ENCODE measurements at regions of chr1 and their contacts with region 1.

Region 1: GRCh38 chr1:31182352-31182751 is 57.3 kb downstream of the NKAIN1 start:
- DNase-seq: peak; percentile 74
- ATAC-seq: peak; percentile 46
- H3K4me3 Mint-ChIP-seq: no peak overlapping the region
- H3K27ac Mint-ChIP-seq: no peak overlapping the region
- H3K4me1 Mint-ChIP-seq: peaks cover 7% of the 10 kb centered on the region
- H3K27me3 Mint-ChIP-seq: peaks cover 38% of the 10 kb centered on the region

Region 2: DNA sequence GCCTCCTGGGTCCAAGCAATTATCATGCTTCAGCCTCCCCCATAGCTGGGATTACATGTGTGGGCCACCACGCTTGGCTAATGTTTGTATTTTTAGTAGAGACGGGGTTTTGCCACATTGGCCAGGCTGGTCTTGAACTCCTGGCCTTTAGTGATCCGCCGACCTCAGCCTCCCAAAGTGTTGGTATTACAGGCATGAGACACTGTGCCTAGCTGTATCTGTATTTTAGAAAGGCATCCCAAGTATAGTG is 11.9 kb before region 1 on chr1:
- CTCF ChIA-PET with region 1: interaction called, 16 read pairs
- POLR2A ChIA-PET with region 1: interaction called, 3 read pairs
- intact Hi-C with region 1: no loop called
- DNase-seq: no peak
- ATAC-seq: no peak
- H3K4me3 Mint-ChIP-seq: no peak overlapping the region
- H3K27ac Mint-ChIP-seq: peak overlapping the region; percentile 53
- H3K4me1 Mint-ChIP-seq: peaks cover 9% of the 10 kb centered on the region
- H3K27me3 Mint-ChIP-seq: no peaks in the 10 kb centered on the region

Region 3: DNA sequence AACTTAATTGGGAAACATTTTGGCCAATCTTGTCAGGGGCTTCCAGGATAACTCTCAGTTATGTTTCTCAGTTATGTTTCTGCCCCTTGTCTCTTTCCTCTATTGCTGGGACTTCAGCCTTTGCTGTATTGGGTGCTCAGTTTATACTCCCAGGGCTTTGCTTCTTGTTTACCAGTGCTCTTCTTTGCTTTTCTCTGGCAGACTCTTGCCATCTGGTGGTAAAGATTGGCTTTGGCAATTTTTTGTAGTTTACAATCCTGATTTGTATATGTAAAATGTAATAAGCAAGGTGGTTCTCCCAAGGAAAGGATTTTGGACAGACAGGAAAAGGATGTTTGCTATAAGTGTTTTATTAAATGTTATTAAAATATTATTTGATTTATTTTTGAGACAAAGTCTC is 152.7 kb after region 1 on chr1:
- CTCF ChIA-PET with region 1: interaction called, 3 read pairs
- POLR2A ChIA-PET with region 1: no interaction called
- intact Hi-C with region 1: loop called (anchors 1 to 10 kb)
- DNase-seq: peak; percentile 6
- ATAC-seq: no peak
- H3K4me3 Mint-ChIP-seq: no peak overlapping the region
- H3K27ac Mint-ChIP-seq: no peak overlapping the region
- H3K4me1 Mint-ChIP-seq: no peaks in the 10 kb centered on the region
- H3K27me3 Mint-ChIP-seq: no peaks in the 10 kb centered on the region

Region 4: GRCh38 chr1:31422505-31423319 is 240.4 kb after region 1 on chr1:
- CTCF ChIA-PET with region 1: interaction called, 5 read pairs
- POLR2A ChIA-PET with region 1: no interaction called
- intact Hi-C with region 1: loop called (anchors 1 kb)
- DNase-seq: peak; percentile 84
- ATAC-seq: peak; percentile 89
- H3K4me3 Mint-ChIP-seq: no peak overlapping the region
- H3K27ac Mint-ChIP-seq: no peak overlapping the region
- H3K4me1 Mint-ChIP-seq: no peaks in the 10 kb centered on the region
- H3K27me3 Mint-ChIP-seq: peaks cover 14% of the 10 kb centered on the region

Region 5: GRCh38 chr1:31548907-31549808 is 366.8 kb after region 1 on chr1:
- CTCF ChIA-PET with region 1: interaction called, 4 read pairs
- POLR2A ChIA-PET with region 1: no interaction called
- intact Hi-C with region 1: loop called (anchors 2 kb)
- DNase-seq: peak; percentile 93
- ATAC-seq: peak; percentile 91
- H3K4me3 Mint-ChIP-seq: peak overlapping the region; percentile 49
- H3K27ac Mint-ChIP-seq: peak overlapping the region; percentile 71
- H3K4me1 Mint-ChIP-seq: peaks cover 9% of the 10 kb centered on the region
- H3K27me3 Mint-ChIP-seq: peaks cover 8% of the 10 kb centered on the region